A673 (cell line): ENCODE measurements at regions of chr20 and their contacts with region 1.

Region 1: DNA sequence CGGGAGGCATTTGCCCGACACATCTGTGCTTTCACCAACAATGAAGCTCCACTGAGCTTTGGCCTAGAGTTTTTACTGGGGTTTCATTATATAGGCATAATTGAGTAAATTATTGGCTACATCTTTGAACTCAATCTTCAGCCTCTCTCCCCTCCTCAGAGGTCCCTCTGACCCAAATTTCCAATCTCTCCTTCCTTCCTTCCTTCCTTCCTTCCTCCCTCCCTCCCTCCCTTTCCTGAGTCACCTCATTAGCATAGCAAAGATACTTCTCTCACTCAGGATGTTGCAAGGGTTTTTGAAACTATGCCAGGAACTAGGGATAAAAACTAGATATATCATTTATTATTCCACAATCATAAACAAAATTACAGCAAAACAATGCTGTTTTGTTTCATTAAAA is 238.2 kb upstream of the PRND start:
- DNase-seq: peak; percentile 97
- H3K4me3 ChIP-seq: peak overlapping the region; percentile 15
- H3K27ac ChIP-seq: peak overlapping the region; percentile 99
- H3K4me1 ChIP-seq: peaks cover 92% of the 10 kb centered on the region
- H3K27me3 ChIP-seq: no peaks in the 10 kb centered on the region
- CTCF ChIP-seq: no peak

Region 2: GRCh38 chr20:4227085-4227821 is 256.2 kb before region 1 on chr20:
- CTCF ChIA-PET with region 1: no interaction called
- POLR2A ChIA-PET with region 1: no interaction called
- intact Hi-C with region 1: loop called (anchors 1 kb)
- DNase-seq: peak; percentile 74
- H3K4me3 ChIP-seq: no peak overlapping the region
- H3K27ac ChIP-seq: peak overlapping the region; percentile 81
- H3K4me1 ChIP-seq: peaks cover 72% of the 10 kb centered on the region
- H3K27me3 ChIP-seq: no peaks in the 10 kb centered on the region
- CTCF ChIP-seq: peak; percentile 61

Region 3: GRCh38 chr20:4449957-4450715 is 33.4 kb before region 1 on chr20:
- CTCF ChIA-PET with region 1: no interaction called
- POLR2A ChIA-PET with region 1: interaction called, 3 read pairs
- intact Hi-C with region 1: loop called (anchors 2 kb)
- DNase-seq: peak; percentile 78
- H3K4me3 ChIP-seq: peak overlapping the region; percentile 26
- H3K27ac ChIP-seq: peak overlapping the region; percentile 47
- H3K4me1 ChIP-seq: peaks cover 35% of the 10 kb centered on the region
- H3K27me3 ChIP-seq: no peaks in the 10 kb centered on the region
- CTCF ChIP-seq: peak; percentile 52

Region 4: DNA sequence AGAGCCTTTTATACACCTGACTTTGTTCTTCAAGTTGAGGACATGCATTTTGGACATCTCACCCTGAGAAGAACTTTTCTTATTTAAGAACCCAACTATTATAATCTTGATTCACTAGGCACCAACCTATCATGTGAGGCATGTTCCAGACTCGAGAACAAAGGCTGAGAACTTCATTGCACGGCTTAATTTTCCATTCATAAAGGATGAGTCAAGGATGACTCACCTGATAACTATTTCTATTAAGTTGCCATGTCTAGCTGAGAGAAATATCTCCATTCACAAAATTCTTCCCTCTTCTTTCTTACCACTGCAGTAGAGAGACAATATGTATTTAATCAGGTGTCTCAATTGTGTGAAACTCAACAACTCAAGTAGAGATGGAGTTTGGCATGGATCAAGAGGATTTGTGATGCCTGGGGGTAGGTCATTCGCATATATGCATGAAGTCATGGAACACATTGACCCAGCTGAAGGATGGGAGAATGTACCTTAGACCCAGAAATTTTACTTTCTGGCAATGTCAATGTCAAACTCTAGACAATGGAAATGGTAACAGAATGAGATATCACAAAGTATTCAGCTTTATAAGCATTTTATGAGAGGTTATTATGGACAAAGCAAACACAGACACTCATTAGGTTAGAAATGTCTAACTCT is 29.5 kb after region 1 on chr20:
- CTCF ChIA-PET with region 1: no interaction called
- POLR2A ChIA-PET with region 1: no interaction called
- intact Hi-C with region 1: loop called (anchors 1 kb)
- DNase-seq: peak; percentile 86
- H3K4me3 ChIP-seq: no peak overlapping the region
- H3K27ac ChIP-seq: no peak overlapping the region
- H3K4me1 ChIP-seq: peaks cover 35% of the 10 kb centered on the region
- H3K27me3 ChIP-seq: no peaks in the 10 kb centered on the region
- CTCF ChIP-seq: no peak

Region 5: GRCh38 chr20:4573564-4574355 is 90.3 kb after region 1 on chr20:
- CTCF ChIA-PET with region 1: no interaction called
- POLR2A ChIA-PET with region 1: no interaction called
- intact Hi-C with region 1: loop called (anchors 5 kb)
- DNase-seq: peak; percentile 80
- H3K4me3 ChIP-seq: peak overlapping the region; percentile 11
- H3K27ac ChIP-seq: peak overlapping the region; percentile 54
- H3K4me1 ChIP-seq: peaks cover 33% of the 10 kb centered on the region
- H3K27me3 ChIP-seq: no peaks in the 10 kb centered on the region
- CTCF ChIP-seq: no peak